ENCODE measurements at regions of chr6 and their contacts with region 1.

Region 1: DNA sequence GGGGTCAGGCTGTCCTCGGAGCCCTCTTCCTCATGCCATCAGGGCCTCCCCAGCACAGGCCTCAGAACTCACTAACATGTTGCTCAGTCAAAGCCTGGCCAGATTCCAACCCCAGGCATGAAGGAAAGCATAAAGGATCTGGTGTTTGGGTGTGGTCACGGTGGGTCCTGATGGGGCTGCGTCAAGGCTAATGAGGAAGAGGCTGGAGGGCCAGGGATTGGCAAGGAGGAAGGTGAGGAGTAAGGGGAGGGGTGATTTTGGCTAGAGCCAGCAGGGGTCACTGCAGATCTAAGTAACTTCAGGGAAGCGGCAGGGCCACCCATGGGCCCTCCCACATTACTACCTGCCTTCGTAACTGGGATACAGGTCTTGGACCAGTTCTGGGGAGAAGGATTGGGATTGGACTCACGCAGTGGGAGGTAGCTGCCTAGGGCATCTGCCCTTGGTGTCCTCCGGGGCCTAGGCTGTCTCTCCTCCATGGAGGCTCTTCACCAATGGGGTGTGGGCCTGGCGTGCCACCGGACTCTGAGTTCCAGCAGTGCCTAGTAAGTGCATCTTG is 36.2 kb upstream of the MRPS18A start:
- DNase-seq: peak; percentile 62 to 83 (median 77)
- H3K4me3 ChIP-seq: no peak overlapping the region
- H3K27ac ChIP-seq: no peak overlapping the region
- H3K4me1 ChIP-seq: no peaks in the 10 kb centered on the region
- H3K27me3 ChIP-seq: no peaks in the 10 kb centered on the region
- CTCF ChIP-seq: peak; percentile 36 to 76 (median 64)
- POLR2A ChIP-seq: no peak

Region 2: DNA sequence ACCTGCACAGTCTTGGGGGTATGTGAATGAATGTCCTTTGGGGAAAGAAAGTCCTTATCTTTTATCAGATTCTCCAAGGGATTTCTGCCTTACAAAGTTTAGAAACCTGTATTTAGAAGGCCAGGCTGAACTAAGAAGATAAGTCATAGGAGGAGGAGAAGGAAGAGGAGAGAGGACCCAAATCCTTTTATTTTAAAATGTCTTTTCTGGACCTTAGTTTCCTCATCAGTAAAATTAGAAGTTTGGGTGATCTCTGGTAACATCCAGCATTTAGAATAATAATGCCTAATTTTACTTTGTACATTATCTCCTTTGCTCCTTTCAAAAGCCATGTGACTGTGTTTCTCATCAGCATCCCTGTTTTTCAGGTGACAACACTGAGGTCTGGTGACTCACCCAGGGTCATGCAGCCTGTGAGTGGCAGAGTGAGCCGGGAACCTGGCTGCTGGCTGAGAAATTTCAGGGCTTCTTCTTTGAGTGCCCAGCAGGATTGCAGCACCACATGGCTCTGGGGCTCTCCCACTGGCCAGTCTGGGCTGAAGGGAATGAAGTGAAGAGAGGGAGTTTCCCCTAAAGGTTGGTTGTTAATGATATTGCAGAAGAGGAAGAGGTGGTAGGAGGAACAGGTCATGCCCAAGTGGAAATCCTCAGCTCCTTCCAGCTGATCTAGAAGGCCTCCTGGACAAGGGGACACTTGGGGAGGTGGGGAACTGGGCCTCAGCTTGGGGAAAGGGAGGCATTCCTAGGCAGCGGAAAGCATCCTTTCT is 80.2 kb after region 1 on chr6:
- intact Hi-C with region 1: no loop called
- DNase-seq: peak in 3 of 7 donors; percentile 36 to 47 (median 37)
- H3K4me3 ChIP-seq: no peak overlapping the region
- H3K27ac ChIP-seq: no peak overlapping the region
- H3K4me1 ChIP-seq: peaks cover 7 to 14% of the 10 kb centered on the region in 2 donors
- H3K27me3 ChIP-seq: no peaks in the 10 kb centered on the region
- CTCF ChIP-seq: no peak
- POLR2A ChIP-seq: no peak

Region 3: GRCh38 chr6:44086931-44087574 is 363.2 kb after region 1 on chr6:
- intact Hi-C with region 1: loop called (anchors 2 to 10 kb)
- DNase-seq: peak; percentile 87 to 96 (median 95)
- H3K4me3 ChIP-seq: no peak overlapping the region
- H3K27ac ChIP-seq: peak overlapping the region in 4 of 5 donors; percentile 53 to 87 (median 69)
- H3K4me1 ChIP-seq: peaks cover 9 to 13% of the 10 kb centered on the region in 2 donors
- H3K27me3 ChIP-seq: no peaks in the 10 kb centered on the region
- CTCF ChIP-seq: peak in 2 of 6 experiments; percentile 13 to 22
- POLR2A ChIP-seq: peak in 1 of 2 donors; percentile 59